ENCODE measurements at regions of chr5 and their contacts with region 1.

Region 1: GRCh38 chr5:142874537-142874936 is 104.4 kb downstream of the ARHGAP26 start:
- DNase-seq: no peak
- ATAC-seq: no peak
- H3K4me3 ChIP-seq: no peak overlapping the region
- H3K27ac ChIP-seq: no peak overlapping the region
- H3K4me1 ChIP-seq: 0 out of 2 replicates have a peak, but pooled peaks cover 2% of the 10 kb centered on the region
- H3K27me3 ChIP-seq: peaks cover 23% of the 10 kb centered on the region
- CTCF ChIP-seq: no peak
- POLR2A ChIP-seq: no peak
- RAD21 ChIP-seq: no peak

Region 2: GRCh38 chr5:142600611-142601358 is 273.8 kb before region 1 on chr5:
- CTCF ChIA-PET with region 1: no interaction called
- POLR2A ChIA-PET with region 1: no interaction called
- dilution Hi-C with region 1: no loop called
- in situ Hi-C with region 1: loop called (anchors 10 kb)
- intact Hi-C with region 1: no loop called
- DNase-seq: peak; percentile 91
- ATAC-seq: peak; percentile 92
- H3K4me3 ChIP-seq: peak overlapping the region; percentile 14; the same call in 1 of the 2 replicates
- H3K27ac ChIP-seq: peak overlapping the region; percentile 82
- H3K4me1 ChIP-seq: peaks cover 20% of the 10 kb centered on the region
- H3K27me3 ChIP-seq: no peaks in the 10 kb centered on the region
- CTCF ChIP-seq: no peak
- POLR2A ChIP-seq: no peak
- RAD21 ChIP-seq: peak; percentile 20

Region 3: GRCh38 chr5:142720641-142721271 is 153.8 kb before region 1 on chr5:
- CTCF ChIA-PET with region 1: interaction called, 38 read pairs
- POLR2A ChIA-PET with region 1: no interaction called
- dilution Hi-C with region 1: loop called (anchors 25 kb)
- in situ Hi-C with region 1: loop called (anchors 5 kb)
- intact Hi-C with region 1: no loop called
- DNase-seq: peak; percentile 33
- ATAC-seq: no peak
- H3K4me3 ChIP-seq: no peak overlapping the region
- H3K27ac ChIP-seq: no peak overlapping the region
- H3K4me1 ChIP-seq: peaks cover 10% of the 10 kb centered on the region
- H3K27me3 ChIP-seq: no peaks in the 10 kb centered on the region
- CTCF ChIP-seq: no peak
- POLR2A ChIP-seq: no peak
- RAD21 ChIP-seq: no peak

Region 4: DNA sequence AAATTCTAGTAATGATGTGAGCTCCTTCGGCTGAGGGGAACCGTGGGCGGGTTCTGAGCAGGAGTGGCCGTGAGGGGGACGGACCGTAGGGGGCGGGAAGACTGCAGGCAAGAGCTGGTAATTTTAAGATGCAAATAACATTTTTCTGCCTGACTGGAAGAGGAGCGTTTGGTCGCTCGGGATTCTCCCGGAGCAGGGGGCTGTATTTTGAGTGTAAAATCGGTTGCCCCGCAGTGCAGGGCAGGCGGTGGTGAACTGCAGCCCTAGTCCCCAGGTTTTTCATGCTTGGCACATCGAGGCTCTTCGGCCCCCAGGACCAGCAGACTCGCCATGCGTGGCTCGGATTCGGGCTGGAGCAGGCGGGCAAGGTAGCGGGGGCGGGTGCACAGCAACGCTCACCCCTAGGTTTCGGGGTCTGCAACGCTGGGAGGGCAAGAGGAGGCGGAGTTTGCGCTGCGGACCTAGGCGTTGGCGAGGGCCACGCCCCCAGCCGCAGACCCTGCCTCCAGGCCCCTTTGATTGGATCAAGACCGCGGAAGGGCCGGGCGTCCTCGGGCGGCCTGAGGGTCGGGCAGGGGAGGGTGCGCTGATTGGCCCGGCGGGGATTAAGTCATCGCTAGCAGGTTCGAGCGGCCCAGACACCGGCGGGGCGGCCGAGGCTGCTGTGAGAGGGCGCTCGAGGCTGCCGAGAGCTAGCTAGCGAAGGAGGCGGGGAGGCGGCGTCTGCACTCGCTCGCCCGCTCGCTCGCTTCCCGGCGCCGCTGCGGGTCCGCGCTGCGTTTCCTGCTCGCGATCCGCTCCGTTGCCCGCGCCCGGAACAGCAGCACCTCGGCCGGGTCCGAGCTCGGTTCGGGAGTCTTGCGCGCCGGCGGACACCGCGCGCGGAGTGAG is 104.6 kb before region 1 on chr5 and contains the start of gene ARHGAP26:
- CTCF ChIA-PET with region 1: interaction called, 3 read pairs
- POLR2A ChIA-PET with region 1: no interaction called
- dilution Hi-C with region 1: no loop called
- in situ Hi-C with region 1: loop called (anchors 5 kb)
- intact Hi-C with region 1: no loop called
- DNase-seq: peak; percentile 91
- ATAC-seq: peak; percentile 100
- H3K4me3 ChIP-seq: peak within 1 kb of the TSS; percentile 87
- H3K27ac ChIP-seq: no peak within 1 kb of the TSS; the same call in 1 of the 2 replicates
- H3K4me1 ChIP-seq: peaks cover 3% of the 10 kb centered on the region; the same call in 1 of the 2 replicates
- H3K27me3 ChIP-seq: peaks cover 34% of the 10 kb centered on the region
- CTCF ChIP-seq: peak; percentile 46
- POLR2A ChIP-seq: peak; percentile 69
- RAD21 ChIP-seq: peak; percentile 55
- total RNA-seq, gene ARHGAP26: 0.54 and 0.56 TPM in 2 replicates